CD8-positive, alpha-beta memory T cell (primary cell): ENCODE measurements at regions of chr2 and their contacts with region 1.

Region 1: GRCh38 chr2:119659601-119660342 is 19.2 kb upstream of the TMEM177 start:
- DNase-seq: peak in 2 of 5 donors; percentile 5 to 17
- H3K4me3 ChIP-seq: no peak overlapping the region
- H3K4me3 Mint-ChIP-seq: no peak overlapping the region
- H3K27ac ChIP-seq: no peak overlapping the region
- H3K27ac Mint-ChIP-seq: peak overlapping the region in 1 of 8 donors; percentile 46
- H3K4me1 ChIP-seq: no peaks in the 10 kb centered on the region
- H3K4me1 Mint-ChIP-seq: peaks cover 7 to 15% (median 11%) of the 10 kb centered on the region in 3 donors
- H3K27me3 ChIP-seq: no peaks in the 10 kb centered on the region
- H3K27me3 Mint-ChIP-seq: peaks cover 15 to 39% of the 10 kb centered on the region in 2 donors

Region 2: DNA sequence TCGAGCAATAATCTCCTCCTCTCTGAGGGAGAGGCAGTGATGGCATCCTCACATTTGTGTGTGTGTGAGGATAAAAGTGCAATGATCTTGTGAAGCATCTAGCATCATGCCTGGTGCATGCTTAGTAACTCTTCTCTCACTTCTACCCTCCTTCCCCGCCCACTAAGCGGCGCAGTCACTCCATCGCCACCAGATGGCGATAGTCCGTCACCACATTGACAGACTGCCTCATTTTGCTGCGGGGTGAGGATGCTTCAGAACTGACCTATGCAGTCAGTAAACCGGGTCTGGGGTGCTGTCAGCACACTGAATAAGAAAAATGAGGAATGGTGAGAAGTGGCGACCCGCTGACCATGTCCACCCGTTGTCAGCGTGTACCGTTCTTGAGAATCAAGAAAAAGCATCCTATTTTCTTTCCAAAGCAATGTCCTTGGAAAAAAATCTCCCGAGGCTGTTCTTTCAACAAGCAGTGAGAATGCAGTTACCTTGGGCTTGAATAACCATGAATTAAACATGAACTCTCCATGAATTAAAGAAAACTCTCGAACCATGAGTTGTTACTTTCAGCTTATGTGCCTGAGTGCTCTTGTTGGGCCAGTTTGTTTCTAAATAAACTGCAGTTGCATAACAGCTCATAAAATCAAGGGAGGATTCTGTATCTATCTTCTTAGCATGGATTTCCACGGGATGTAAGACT is 18.1 kb before region 1 on chr2:
- CTCF ChIA-PET with region 1: interaction called, 30 read pairs
- POLR2A ChIA-PET with region 1: no interaction called
- DNase-seq: peak; percentile 41 to 75 (median 57)
- H3K4me3 ChIP-seq: no peak overlapping the region
- H3K4me3 Mint-ChIP-seq: no peak overlapping the region
- H3K27ac ChIP-seq: no peak overlapping the region
- H3K27ac Mint-ChIP-seq: no peak overlapping the region
- H3K4me1 ChIP-seq: no peaks in the 10 kb centered on the region
- H3K4me1 Mint-ChIP-seq: peaks cover 1 to 6% (median 5%) of the 10 kb centered on the region in 3 donors
- H3K27me3 ChIP-seq: no peaks in the 10 kb centered on the region
- H3K27me3 Mint-ChIP-seq: peaks cover 6 to 7% of the 10 kb centered on the region in 2 donors

Region 3: DNA sequence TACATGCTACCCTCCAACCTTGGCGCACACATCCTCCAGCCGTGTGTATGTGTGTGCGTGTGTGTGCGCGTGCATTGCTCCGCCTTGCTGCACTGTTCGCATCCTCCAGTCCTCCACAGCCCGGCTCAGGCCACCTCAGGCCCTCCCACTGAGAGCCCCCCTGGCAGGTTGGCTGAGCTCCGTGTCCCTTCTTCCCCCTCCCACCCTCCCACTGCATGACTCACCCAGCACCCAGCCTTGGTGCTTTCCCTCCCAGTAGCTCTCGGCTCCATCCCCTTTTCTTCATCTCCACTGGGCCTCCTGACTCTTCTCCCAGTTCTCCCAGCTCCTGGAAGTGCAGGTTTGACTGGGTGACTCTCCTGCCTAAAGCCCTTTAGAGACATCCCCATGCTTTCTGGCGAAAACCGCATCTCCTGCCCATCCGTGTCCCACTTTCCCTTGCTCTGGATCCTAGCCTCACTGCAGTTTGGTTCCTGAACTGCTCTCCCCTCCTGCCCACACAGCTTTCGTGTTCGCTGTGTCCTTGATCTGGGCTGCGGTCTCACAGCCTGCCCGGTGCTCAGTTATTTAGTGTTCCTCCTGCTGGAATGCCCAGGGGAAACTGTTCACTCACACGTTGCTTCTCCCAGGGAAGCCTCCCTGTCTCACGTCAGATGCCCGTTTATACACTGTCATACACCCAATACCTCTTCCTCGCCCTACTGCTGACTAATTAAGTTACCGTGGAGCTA is 24.1 kb after region 1 on chr2:
- CTCF ChIA-PET with region 1: no interaction called
- POLR2A ChIA-PET with region 1: no interaction called
- DNase-seq: no peak
- H3K4me3 ChIP-seq: no peak overlapping the region
- H3K4me3 Mint-ChIP-seq: peak overlapping the region in 1 of 7 donors; percentile 62
- H3K27ac ChIP-seq: no peak overlapping the region
- H3K27ac Mint-ChIP-seq: peak overlapping the region in 2 of 8 donors; percentile 42 to 72
- H3K4me1 ChIP-seq: peaks cover 12% of the 10 kb centered on the region
- H3K4me1 Mint-ChIP-seq: peaks cover 19 to 28% (median 27%) of the 10 kb centered on the region in 3 donors
- H3K27me3 ChIP-seq: no peaks in the 10 kb centered on the region
- H3K27me3 Mint-ChIP-seq: no peaks in the 10 kb centered on the region